Caco-2 (cell line): ENCODE measurements at regions of chr4 and their contacts with region 1.

Region 1: DNA sequence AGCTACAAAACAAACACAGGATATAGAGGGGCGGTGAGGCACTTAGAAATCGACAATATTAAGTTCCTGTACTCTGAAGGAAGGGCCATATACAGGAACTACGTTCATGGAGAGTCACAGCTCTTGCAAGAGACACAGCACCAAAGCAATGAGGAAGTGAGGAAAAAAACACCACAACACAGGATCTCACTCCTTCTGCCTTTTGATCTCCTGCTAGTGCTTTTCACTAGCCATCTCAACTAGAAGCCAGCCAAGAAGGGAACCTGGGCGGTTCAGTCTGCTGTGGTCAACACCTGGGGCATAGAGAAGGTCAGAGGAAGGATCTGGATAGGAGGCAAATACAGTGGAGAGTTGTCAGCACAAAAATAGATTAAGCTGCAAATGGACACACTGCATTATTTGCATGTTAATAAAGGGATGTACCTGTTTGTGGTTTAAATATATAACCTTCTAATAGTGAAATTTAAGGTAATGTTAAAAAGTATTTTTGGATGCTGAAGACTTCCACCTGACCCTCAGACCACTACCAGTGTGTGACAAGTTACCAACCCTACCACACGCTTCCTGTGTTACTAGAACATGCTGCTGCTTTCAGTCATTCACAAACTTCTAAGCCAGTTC is 104.6 kb downstream of the DTHD1 start:
- DNase-seq: no peak
- H3K4me3 ChIP-seq: no peak overlapping the region
- H3K4me3 Mint-ChIP-seq: no peak overlapping the region
- H3K27ac Mint-ChIP-seq: no peak overlapping the region
- H3K4me1 ChIP-seq: no peaks in the 10 kb centered on the region
- H3K4me1 Mint-ChIP-seq: no peaks in the 10 kb centered on the region
- H3K27me3 ChIP-seq: no peaks in the 10 kb centered on the region
- H3K27me3 Mint-ChIP-seq: peaks cover 15% of the 10 kb centered on the region
- CTCF ChIP-seq: no peak

Region 2: DNA sequence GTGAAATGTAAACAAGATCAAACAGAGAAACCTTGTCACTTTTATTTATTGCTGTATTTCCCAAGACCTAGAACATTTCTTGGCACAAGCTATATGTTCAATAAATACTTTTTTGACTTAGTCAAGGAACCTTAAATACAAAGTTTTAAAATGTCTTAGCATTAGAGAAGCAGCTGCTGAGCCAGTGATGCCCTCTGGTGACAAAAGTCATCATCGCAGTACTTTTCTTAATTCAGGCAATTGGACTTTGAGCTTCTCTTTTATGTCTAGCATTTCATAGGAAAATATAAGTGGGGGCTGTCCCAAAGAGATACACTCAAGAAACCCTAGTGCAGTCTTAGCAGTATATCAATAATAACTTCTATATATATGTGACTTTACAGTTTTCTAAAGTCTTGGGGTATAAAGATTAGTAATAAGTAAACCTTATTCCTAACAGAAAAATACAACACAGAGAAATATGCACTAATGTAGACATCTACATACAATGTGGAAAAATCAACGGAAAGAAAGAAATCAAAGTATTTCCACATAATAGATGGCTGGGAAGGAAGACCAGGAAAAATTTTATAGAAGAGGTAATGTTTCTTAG is 13.8 kb after region 1 on chr4:
- CTCF ChIA-PET with region 1: interaction called, 6 read pairs
- POLR2A ChIA-PET with region 1: no interaction called
- intact Hi-C with region 1: loop called (anchors 1 kb)
- DNase-seq: peak in 1 of 2 experiments; percentile 16
- H3K4me3 ChIP-seq: no peak overlapping the region
- H3K4me3 Mint-ChIP-seq: no peak overlapping the region
- H3K27ac Mint-ChIP-seq: no peak overlapping the region
- H3K4me1 ChIP-seq: no peaks in the 10 kb centered on the region
- H3K4me1 Mint-ChIP-seq: no peaks in the 10 kb centered on the region
- H3K27me3 ChIP-seq: no peaks in the 10 kb centered on the region
- H3K27me3 Mint-ChIP-seq: peaks cover 3% of the 10 kb centered on the region
- CTCF ChIP-seq: peak; percentile 52 to 64

Region 3: GRCh38 chr4:36427696-36428095 is 41.6 kb after region 1 on chr4:
- CTCF ChIA-PET with region 1: no interaction called
- POLR2A ChIA-PET with region 1: no interaction called
- intact Hi-C with region 1: no loop called
- DNase-seq: no peak
- H3K4me3 ChIP-seq: no peak overlapping the region
- H3K4me3 Mint-ChIP-seq: no peak overlapping the region
- H3K27ac Mint-ChIP-seq: no peak overlapping the region
- H3K4me1 ChIP-seq: no peaks in the 10 kb centered on the region
- H3K4me1 Mint-ChIP-seq: no peaks in the 10 kb centered on the region
- H3K27me3 ChIP-seq: no peaks in the 10 kb centered on the region
- H3K27me3 Mint-ChIP-seq: no peaks in the 10 kb centered on the region
- CTCF ChIP-seq: no peak

Region 4: DNA sequence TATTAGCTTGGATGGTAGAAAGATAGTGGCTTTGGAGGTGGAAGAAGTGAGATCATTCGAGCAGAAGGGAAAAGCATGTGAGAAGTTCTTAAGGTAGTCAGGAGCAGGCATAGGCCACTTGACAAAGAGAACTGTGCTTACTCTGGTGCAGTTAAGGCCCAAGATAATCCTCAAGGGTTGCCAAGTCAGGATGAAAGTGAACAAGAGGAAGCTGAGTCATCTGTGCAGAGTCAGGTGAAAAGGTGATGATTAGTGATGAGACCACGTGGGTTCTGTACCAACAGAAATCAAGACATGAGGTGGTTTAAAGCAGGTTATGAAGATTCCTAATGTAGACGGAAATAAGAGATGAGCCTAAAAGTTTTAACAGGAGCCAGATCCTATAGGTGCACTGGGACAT is 265.2 kb after region 1 on chr4:
- CTCF ChIA-PET with region 1: no interaction called
- POLR2A ChIA-PET with region 1: no interaction called
- intact Hi-C with region 1: no loop called
- DNase-seq: no peak
- H3K4me3 ChIP-seq: no peak overlapping the region
- H3K4me3 Mint-ChIP-seq: no peak overlapping the region
- H3K27ac Mint-ChIP-seq: no peak overlapping the region
- H3K4me1 ChIP-seq: no peaks in the 10 kb centered on the region
- H3K4me1 Mint-ChIP-seq: no peaks in the 10 kb centered on the region
- H3K27me3 ChIP-seq: no peaks in the 10 kb centered on the region
- H3K27me3 Mint-ChIP-seq: no peaks in the 10 kb centered on the region
- CTCF ChIP-seq: no peak